Calu3 (cell line): ENCODE measurements at regions of chr12 and their contacts with region 1.

Region 1: GRCh38 chr12:4604684-4605193 is 42.7 kb downstream of the DYRK4 start:
- DNase-seq: peak; percentile 81
- H3K4me3 Mint-ChIP-seq: peak overlapping the region; percentile 97
- H3K27ac Mint-ChIP-seq: peak overlapping the region; percentile 88
- H3K4me1 Mint-ChIP-seq: no peaks in the 10 kb centered on the region
- H3K27me3 Mint-ChIP-seq: peaks cover 31% of the 10 kb centered on the region
- CTCF ChIP-seq: peak; percentile 95

Region 2: DNA sequence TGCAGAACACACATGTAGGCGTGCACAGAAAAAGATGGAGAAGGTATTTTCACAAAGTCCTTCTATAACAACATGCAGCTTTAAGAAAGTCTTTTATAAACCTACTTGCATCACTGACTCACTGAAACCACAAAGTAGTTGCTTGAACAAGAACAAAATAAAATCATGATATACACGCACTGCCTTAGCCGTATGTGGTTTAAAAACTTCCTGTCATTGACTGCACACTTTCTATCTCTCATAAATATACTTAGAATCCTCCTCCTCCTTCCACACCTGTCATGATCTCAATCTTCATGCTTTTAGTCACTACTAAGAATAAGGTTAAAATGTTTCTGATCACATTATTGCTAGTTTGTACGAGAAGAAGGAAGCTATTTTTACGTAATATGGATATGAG is 97.9 kb before region 1 on chr12:
- CTCF ChIA-PET with region 1: no interaction called
- intact Hi-C with region 1: no loop called
- DNase-seq: no peak
- H3K4me3 Mint-ChIP-seq: no peak overlapping the region
- H3K27ac Mint-ChIP-seq: no peak overlapping the region
- H3K4me1 Mint-ChIP-seq: no peaks in the 10 kb centered on the region
- H3K27me3 Mint-ChIP-seq: no peaks in the 10 kb centered on the region
- CTCF ChIP-seq: no peak

Region 3: DNA sequence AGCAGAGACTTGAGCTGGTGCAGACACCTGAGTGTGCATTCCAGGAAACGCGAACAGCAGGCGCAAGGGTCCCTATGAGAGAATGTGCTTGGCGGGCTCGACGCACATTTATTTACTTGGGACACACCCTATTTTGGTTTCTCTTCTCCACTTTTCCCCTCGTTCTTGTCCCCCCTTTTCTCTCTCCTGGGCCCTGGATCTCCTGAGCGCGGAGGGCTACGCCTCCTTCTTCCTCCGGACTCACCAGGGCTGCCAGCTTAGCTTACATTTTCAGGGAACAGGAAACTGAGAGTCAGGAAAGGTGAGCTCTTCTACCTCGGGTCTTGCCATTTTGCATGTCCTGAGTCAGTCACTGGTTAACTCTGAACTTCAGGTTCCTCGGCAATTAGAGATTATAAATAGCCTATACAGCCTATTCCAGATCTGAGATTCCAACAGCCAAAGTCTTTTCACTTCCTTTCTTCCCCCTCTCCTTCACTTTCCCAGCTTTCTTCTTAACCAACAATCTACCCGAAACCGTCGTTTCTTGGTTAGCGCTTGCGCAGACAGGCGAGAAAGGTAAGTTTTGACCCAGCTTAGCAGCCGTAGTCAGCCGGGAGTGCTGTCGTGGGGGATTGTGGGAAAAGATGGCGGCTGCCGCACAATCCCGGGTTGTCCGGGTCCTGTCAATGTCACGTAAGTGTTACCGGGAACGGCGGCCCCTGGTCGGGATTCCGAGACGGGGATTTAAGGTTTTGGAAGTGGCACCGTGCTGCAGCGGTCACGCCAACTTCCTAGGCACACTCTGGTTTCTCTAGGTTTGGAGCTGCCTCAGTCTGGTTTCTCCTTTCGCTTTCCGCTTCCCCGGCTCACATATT is 44.0 kb after region 1 on chr12 and contains the starts of genes AKAP3 and NDUFA9:
- CTCF ChIA-PET with region 1: no interaction called
- intact Hi-C with region 1: loop called (anchors 2 kb)
- DNase-seq: peak; percentile 80
- H3K4me3 Mint-ChIP-seq: peak within 1 kb of the TSS; percentile 99
- H3K27ac Mint-ChIP-seq: peak within 1 kb of the TSS; percentile 99
- H3K4me1 Mint-ChIP-seq: peaks cover 22% of the 10 kb centered on the region
- H3K27me3 Mint-ChIP-seq: peaks cover 11% of the 10 kb centered on the region
- CTCF ChIP-seq: no peak
- total RNA-seq, gene AKAP3: 1.5 and 1.6 TPM in 2 replicates
- total RNA-seq, gene NDUFA9: 125 and 130 TPM in 2 replicates

Region 4: DNA sequence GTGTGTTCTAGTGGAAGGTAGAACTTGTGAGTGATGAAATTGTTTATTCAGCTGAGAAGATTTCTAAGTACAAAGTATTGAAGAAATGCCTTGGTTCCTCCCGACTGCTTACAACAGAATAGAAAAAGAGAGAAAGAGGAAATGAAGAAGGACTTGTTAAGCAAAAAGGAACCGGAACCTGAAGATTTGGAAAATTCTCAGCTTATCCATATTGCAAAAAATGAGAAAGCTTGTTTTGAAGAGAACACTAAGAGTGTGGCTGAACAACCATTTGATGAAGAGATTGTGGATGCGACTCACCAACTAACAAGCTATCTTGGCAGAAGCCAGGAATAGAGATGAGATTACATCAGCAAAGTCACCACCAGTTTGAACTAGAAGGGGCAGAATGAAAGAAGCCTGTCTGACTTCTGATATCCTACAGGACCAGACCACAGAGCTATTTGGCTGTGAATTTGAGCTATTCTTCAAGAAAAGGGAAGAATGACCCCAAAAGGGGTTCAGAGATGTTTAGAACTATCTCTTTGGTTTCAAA is 59.3 kb after region 1 on chr12:
- CTCF ChIA-PET with region 1: interaction called, 10 read pairs
- intact Hi-C with region 1: no loop called
- DNase-seq: no peak
- H3K4me3 Mint-ChIP-seq: no peak overlapping the region
- H3K27ac Mint-ChIP-seq: no peak overlapping the region
- H3K4me1 Mint-ChIP-seq: no peaks in the 10 kb centered on the region
- H3K27me3 Mint-ChIP-seq: no peaks in the 10 kb centered on the region
- CTCF ChIP-seq: no peak